Naive thymus-derived CD8-positive, alpha-beta T cell (primary cell): ENCODE measurements at regions of chr1 and their contacts with region 1.

Region 1: GRCh38 chr1:19439464-19440171 is 45.7 kb downstream of the CAPZB start:
- DNase-seq: peak; percentile 33 to 80 (median 50)
- ATAC-seq: peak; percentile 78 to 82
- H3K4me3 Mint-ChIP-seq: peak overlapping the region in 9 of 10 donors; percentile 8 to 73 (median 56)
- H3K27ac Mint-ChIP-seq: peak overlapping the region; percentile 68 to 93 (median 88)
- H3K4me1 Mint-ChIP-seq: peaks cover 53 to 94% (median 93%) of the 10 kb centered on the region in 4 donors
- H3K27me3 Mint-ChIP-seq: no peaks in the 10 kb centered on the region

Region 2: DNA sequence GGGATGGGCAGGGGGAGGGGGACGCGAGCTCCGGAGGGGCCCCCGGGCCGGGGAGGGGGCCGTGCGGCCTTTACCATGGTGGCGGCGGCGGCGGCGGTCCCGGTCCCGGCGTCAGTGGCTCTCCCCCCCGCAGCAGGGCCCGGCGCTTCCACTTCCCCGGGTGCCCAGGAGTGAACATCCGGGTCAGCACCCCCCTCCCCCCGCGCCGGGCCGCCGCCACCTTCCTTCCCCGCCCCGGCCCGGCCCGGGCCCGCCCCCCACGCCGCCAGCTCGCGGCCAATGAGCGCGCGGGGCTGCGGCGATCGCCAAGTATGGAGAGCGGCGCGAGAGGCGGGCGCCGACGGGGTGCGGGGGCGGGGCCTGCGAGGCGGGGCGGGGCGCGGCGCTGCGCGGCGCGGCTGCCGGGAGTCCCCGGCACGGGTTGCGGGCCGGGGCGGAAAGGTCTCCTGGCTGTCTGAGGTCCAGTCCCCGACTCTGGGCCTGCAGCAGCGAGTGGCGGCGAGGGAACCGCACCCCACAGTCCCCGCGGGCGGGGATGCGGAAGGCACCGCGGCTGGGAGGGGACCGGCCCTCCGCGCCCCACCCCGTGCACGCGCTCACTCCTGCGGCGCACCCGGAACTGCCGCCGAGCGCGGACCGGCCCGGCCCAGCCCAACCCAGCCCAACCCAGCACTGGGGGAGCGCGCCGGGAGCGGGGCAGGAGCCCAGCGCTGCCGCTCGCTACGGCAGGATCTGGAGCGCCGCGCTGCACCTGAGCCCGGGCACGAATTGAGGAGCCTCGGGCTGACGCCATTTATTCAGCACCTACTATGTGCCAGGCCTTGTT is 46.0 kb after region 1 on chr1 and contains the start of gene CAPZB:
- POLR2A ChIA-PET with region 1: interaction called, 808 read pairs
- DNase-seq: peak; percentile 87 to 98 (median 92)
- ATAC-seq: peak; percentile 84 to 86
- H3K4me3 Mint-ChIP-seq: peak within 1 kb of the TSS; percentile 89 to 96 (median 94)
- H3K27ac Mint-ChIP-seq: peak within 1 kb of the TSS; percentile 95 to 98 (median 97)
- H3K4me1 Mint-ChIP-seq: peaks cover 40 to 80% (median 68%) of the 10 kb centered on the region in 4 donors
- H3K27me3 Mint-ChIP-seq: no peaks in the 10 kb centered on the region
- polyA plus RNA-seq, gene CAPZB: 475 to 592 (median 562) TPM